Right ventricle myocardium inferior (tissue), 1 donor: ENCODE measurements at regions of chr13 and their contacts with region 1.

Region 1: DNA sequence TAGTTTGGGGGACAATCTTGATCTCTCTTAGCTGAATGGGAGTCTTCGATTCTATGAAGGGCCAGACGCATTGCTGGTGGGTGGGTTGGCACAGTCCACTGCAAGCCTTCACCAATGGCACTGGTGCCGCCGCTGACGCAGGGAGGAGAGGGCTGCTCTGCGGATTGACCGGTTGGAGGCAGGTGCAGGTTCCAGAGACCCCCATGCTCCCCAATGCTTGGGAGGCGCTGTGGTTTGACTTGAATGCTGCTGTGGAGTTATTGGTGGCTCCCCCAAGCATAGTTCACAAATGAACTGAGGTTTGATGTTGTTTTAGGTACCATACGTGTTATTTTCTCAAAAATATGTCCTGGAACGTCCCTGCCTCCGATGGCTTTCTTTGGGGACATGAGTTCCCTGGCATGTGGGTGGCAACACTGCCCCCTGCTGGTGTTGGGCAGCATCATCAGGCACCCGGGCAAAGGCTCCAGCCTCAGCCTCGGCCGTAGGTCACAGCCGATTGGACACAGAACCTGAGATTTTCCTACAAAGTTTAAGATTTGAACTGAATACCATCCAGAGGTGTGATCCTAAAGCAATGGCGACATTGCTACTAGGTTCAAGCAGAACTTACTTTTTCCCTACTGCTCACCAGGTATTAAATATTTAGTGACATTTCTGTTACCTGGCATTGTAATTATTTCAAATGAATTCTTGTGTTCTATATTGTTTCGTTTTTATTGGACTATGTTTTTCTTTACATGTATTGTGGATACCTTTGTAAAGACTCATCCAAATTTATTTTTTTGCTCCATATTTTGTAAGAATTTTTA is 95.5 kb downstream of the ANKRD10 start:
- DNase-seq: peak; percentile 90
- ATAC-seq: peak; percentile 79

Region 2: DNA sequence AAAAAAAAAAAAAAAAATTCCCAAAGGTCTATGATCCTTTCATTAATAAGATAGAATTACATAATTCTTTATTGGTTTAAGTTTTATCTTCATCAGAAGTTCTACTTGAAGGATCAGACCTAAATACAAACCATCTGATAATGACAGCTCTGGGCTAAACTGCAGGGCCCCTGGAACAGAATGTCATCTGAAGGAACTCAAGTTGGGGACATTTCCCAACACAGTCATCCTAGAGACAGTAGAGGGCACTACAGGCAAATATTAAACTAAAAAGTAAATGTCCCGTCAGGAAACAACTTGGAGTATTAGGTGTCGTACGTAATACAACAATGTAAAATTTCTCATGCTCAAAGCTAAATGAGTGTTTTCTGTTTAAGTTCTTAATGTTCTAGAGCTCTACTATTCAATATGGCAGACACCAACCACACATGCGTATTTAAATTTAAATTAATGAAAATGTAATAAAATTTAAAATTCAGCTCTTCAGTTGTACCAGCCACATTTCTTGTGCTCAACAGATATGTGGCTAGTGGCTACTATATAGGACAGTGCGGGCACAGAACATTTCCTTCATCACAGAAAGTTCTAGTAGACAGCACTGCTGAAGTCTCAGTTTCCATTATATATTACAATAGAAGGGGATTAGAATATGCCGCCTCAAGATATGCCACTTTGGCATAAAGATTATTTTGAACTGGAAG is 225.8 kb before region 1 on chr13:
- intact Hi-C with region 1: loop called (anchors 1 kb)
- DNase-seq: no peak
- ATAC-seq: peak; percentile 80

Region 3: GRCh38 chr13:110799246-110800236 is 19.9 kb before region 1 on chr13:
- intact Hi-C with region 1: no loop called
- DNase-seq: no peak
- ATAC-seq: peak; percentile 76